ENCODE measurements at regions of chr1 and their contacts with region 1.

Region 1: DNA sequence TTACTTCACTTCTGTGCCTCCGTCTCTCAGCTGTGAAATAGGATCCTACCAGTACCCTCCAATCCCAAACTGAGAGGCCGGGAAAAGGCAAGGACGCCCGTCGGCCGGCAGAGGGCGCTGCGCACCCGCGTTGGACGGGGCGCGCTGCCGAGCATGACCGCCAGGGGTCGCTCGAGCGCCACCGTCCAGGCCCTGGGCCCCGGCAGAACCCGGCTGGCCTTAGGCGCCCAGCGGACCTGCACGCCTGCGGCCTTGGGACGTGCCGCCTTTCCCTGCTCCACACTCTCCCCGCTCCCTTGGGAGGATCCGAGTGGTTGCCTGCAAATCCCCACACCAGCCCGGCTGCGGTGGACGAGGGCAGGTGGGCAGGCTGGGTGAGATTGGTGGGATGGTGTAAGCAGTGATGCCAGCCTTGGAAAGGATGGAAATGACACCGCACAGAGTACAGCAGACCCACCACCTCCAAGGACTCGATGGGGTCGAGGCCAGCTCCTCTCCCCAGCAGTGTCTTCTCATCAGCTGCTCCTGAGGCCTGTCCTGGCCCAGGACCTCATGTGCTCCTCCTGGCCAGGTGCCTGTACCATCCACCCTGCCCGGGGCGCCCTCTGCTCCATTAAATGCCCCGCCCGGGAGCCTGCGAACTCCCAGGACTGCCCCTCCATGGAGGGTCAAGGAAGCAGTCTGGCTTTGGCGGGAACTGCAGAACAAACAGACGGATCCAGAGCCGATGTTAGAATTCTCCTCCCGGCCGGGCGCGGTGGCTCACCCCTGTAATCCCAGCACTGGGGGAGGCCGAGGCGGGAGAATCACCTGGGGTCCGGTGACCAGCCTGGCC is 47.4 kb upstream of the LBR start:
- DNase-seq: peak; percentile 44 to 90 (median 70)
- ATAC-seq: peak; percentile 86
- H3K4me3 ChIP-seq: no peak overlapping the region
- H3K4me3 Mint-ChIP-seq: no peak overlapping the region
- H3K27ac ChIP-seq: no peak overlapping the region
- H3K27ac Mint-ChIP-seq: no peak overlapping the region
- H3K4me1 ChIP-seq: peaks cover 53% of the 10 kb centered on the region
- H3K4me1 Mint-ChIP-seq: peaks cover 48% of the 10 kb centered on the region
- H3K27me3 ChIP-seq: no peaks in the 10 kb centered on the region
- H3K27me3 Mint-ChIP-seq: no peaks in the 10 kb centered on the region
- CTCF ChIP-seq: peak; percentile 100

Region 2: DNA sequence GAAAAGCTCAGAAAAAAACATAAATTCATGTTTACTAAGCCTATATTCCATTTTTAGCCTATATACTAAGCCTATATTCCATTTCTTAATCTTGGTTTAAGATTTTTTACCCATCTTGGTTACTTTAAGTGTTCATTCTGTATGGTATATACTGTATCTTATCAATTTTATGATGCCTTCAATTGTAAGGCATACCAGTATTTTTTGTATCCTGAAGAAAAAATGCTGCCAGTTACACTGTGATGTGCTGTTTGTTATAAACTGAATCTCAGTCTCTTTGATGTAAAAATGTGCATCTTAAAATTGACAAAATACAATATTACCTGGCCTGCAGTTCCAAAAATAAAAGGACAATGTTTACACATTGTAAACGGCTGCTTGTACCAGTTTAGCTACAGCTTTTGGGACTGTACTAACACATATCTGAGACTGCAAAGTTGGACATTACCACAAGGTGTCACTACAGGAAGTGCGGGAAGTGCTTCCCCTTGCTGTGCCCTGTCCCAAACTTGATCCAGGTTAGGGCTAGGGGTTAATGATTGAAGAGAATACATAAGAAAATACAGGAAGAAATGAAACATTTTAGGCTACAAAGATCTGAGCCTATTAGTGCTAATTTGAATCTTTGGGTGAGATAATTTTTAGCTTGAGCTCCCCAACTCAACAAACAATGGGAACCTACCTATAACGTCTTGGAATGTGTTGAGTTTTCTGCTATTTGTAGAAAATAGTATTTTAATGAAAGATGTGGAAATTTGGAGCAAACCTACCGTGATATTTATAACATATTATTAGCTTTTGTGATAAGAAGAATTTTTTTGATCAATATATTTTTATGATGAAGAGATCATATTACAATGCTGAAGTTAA is 156.3 kb before region 1 on chr1:
- CTCF ChIA-PET with region 1: interaction called, 3 read pairs
- POLR2A ChIA-PET with region 1: no interaction called
- intact Hi-C with region 1: loop called in 1 of 2 experiments (anchors 1 kb)
- DNase-seq: peak in 4 of 9 experiments; percentile 13 to 55 (median 32)
- ATAC-seq: peak; percentile 42
- H3K4me3 ChIP-seq: no peak overlapping the region
- H3K4me3 Mint-ChIP-seq: no peak overlapping the region
- H3K27ac ChIP-seq: no peak overlapping the region
- H3K27ac Mint-ChIP-seq: no peak overlapping the region
- H3K4me1 ChIP-seq: no peaks in the 10 kb centered on the region
- H3K4me1 Mint-ChIP-seq: no peaks in the 10 kb centered on the region
- H3K27me3 ChIP-seq: peaks cover 0 to 4% of the 10 kb centered on the region in 2 experiments
- H3K27me3 Mint-ChIP-seq: peaks cover 2% of the 10 kb centered on the region
- CTCF ChIP-seq: peak; percentile 69

Region 3: GRCh38 chr1:225441314-225442122 is 33.7 kb before region 1 on chr1:
- CTCF ChIA-PET with region 1: interaction called, 18 read pairs
- POLR2A ChIA-PET with region 1: interaction called, 7 read pairs
- intact Hi-C with region 1: no loop called
- DNase-seq: no peak
- ATAC-seq: no peak
- H3K4me3 ChIP-seq: peak overlapping the region in 1 of 2 experiments; percentile 14
- H3K4me3 Mint-ChIP-seq: peak overlapping the region; percentile 61
- H3K27ac ChIP-seq: peak overlapping the region in 1 of 2 experiments; percentile 51
- H3K27ac Mint-ChIP-seq: peak overlapping the region; percentile 79
- H3K4me1 ChIP-seq: peaks cover 51% of the 10 kb centered on the region
- H3K4me1 Mint-ChIP-seq: peaks cover 53% of the 10 kb centered on the region
- H3K27me3 ChIP-seq: no peaks in the 10 kb centered on the region
- H3K27me3 Mint-ChIP-seq: no peaks in the 10 kb centered on the region
- CTCF ChIP-seq: no peak

Region 4: GRCh38 chr1:225460737-225461562 is 14.3 kb before region 1 on chr1:
- CTCF ChIA-PET with region 1: interaction called, 24 read pairs
- POLR2A ChIA-PET with region 1: no interaction called
- intact Hi-C with region 1: no loop called
- DNase-seq: peak; percentile 26 to 91 (median 64)
- ATAC-seq: peak; percentile 94
- H3K4me3 ChIP-seq: peak overlapping the region in 1 of 2 experiments; percentile 28
- H3K4me3 Mint-ChIP-seq: no peak overlapping the region
- H3K27ac ChIP-seq: peak overlapping the region; percentile 16 to 70
- H3K27ac Mint-ChIP-seq: peak overlapping the region; percentile 80
- H3K4me1 ChIP-seq: peaks cover 31% of the 10 kb centered on the region
- H3K4me1 Mint-ChIP-seq: peaks cover 39% of the 10 kb centered on the region
- H3K27me3 ChIP-seq: no peaks in the 10 kb centered on the region
- H3K27me3 Mint-ChIP-seq: no peaks in the 10 kb centered on the region
- CTCF ChIP-seq: no peak

Region 5: GRCh38 chr1:225845571-225846259 is 370.5 kb after region 1 on chr1:
- CTCF ChIA-PET with region 1: interaction called, 3 read pairs
- POLR2A ChIA-PET with region 1: no interaction called
- intact Hi-C with region 1: loop called in 1 of 2 experiments (anchors 5 kb)
- DNase-seq: peak in 5 of 9 experiments; percentile 27 to 51 (median 39)
- ATAC-seq: no peak
- H3K4me3 ChIP-seq: no peak overlapping the region
- H3K4me3 Mint-ChIP-seq: no peak overlapping the region
- H3K27ac ChIP-seq: no peak overlapping the region
- H3K27ac Mint-ChIP-seq: peak overlapping the region; percentile 52
- H3K4me1 ChIP-seq: peaks cover 54% of the 10 kb centered on the region
- H3K4me1 Mint-ChIP-seq: peaks cover 64% of the 10 kb centered on the region
- H3K27me3 ChIP-seq: no peaks in the 10 kb centered on the region
- H3K27me3 Mint-ChIP-seq: no peaks in the 10 kb centered on the region
- CTCF ChIP-seq: peak; percentile 16

Region 6: DNA sequence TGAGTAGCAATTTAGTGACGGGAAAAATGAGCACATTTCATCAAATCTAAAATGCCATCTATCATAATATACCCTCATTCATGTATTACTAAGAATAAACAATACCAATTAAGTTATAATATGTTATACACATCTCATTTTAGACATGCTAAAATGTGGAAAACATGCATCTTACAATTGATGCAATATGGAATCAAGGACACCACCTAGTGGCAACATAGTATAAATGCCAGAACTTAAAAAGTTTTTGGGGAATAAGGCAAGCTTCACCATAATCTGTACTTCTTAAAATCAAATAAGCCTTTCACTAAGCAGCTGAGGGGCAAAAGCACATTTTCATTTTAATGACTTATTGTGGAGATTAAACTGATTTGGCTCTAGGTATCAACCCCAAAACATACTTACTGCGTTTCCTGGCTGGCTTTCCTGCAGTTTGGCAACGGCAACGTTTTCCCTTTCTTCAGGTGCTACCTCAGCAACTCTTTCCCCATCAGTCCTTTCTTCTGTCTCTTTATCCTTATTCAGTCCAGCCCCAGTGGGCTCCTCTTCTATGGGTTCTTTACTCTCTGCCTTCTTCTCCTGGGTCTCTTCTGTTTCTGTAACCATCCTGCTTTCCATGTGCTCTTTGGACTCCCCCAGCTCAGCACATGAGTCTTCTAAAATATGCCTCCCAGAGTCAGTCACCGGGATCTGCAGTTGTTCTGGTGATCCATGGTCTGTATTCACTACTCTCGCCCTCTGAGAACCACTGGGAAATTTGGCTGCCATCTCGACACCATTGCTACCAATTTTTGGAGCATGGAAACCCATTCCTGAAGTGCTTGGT is 512.5 kb after region 1 on chr1:
- CTCF ChIA-PET with region 1: interaction called, 33 read pairs
- POLR2A ChIA-PET with region 1: no interaction called
- intact Hi-C with region 1: no loop called
- DNase-seq: peak in 2 of 9 experiments; percentile 53 to 66
- ATAC-seq: peak; percentile 79
- H3K4me3 ChIP-seq: no peak overlapping the region
- H3K4me3 Mint-ChIP-seq: no peak overlapping the region
- H3K27ac ChIP-seq: no peak overlapping the region
- H3K27ac Mint-ChIP-seq: peak overlapping the region; percentile 30
- H3K4me1 ChIP-seq: peaks cover 9% of the 10 kb centered on the region
- H3K4me1 Mint-ChIP-seq: peaks cover 28% of the 10 kb centered on the region
- H3K27me3 ChIP-seq: no peaks in the 10 kb centered on the region
- H3K27me3 Mint-ChIP-seq: no peaks in the 10 kb centered on the region
- CTCF ChIP-seq: peak; percentile 74